HCT116 (cell line): ENCODE measurements at regions of chr7 and their contacts with region 1.

Region 1: GRCh38 chr7:86814661-86815379 is 171.1 kb downstream of the GRM3 start:
- DNase-seq: peak; percentile 28
- ATAC-seq: peak; percentile 74
- H3K4me3 ChIP-seq: no peak overlapping the region
- H3K27ac ChIP-seq: no peak overlapping the region
- H3K4me1 ChIP-seq: no peaks in the 10 kb centered on the region
- H3K27me3 ChIP-seq: 0 out of 2 replicates have a peak, but pooled peaks cover 5% of the 10 kb centered on the region
- CTCF ChIP-seq: peak; percentile 40 to 68 (median 68); a peak in 5 of 6 replicates
- POLR2A ChIP-seq: no peak
- RAD21 ChIP-seq: peak; percentile 64

Region 2: DNA sequence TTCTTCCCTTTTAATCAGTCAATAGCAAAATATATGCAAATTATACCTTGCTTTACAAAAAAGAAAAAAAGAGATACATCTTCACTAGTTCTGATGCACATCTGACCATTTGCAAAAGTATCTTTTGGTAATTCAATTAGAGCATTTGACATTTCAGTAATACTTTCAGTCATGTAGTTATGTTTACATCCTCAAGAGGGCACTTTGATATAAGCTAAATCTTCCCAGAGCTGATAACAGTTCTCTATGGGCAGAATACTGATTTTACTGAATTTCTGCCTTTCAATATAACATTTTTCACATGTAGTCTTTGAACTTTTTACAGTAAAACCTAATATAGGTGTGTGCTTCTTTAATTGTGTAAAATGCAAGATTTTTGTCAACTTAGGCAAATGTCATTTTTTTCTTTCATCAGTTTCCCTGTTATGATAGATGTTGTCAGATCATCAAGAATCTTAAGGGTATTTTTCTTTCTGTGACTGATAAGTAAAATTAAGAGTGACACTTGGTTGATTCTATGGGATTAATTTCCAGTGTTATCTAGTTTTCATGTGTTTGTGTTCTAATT is 924.5 kb before region 1 on chr7:
- CTCF ChIA-PET with region 1: interaction called, 12 read pairs
- POLR2A ChIA-PET with region 1: no interaction called
- RAD21 ChIA-PET with region 1: interaction called in 1 of 2 experiments, 3 read pairs
- intact Hi-C with region 1: loop called (anchors 1 kb)
- DNase-seq: peak; percentile 6
- ATAC-seq: peak; percentile 54; the same call in 1 of the 2 replicates
- H3K4me3 ChIP-seq: no peak overlapping the region
- H3K27ac ChIP-seq: no peak overlapping the region
- H3K4me1 ChIP-seq: no peaks in the 10 kb centered on the region
- H3K27me3 ChIP-seq: no peaks in the 10 kb centered on the region
- CTCF ChIP-seq: peak; percentile 38 to 62 (median 41); a peak in 5 of 6 replicates
- POLR2A ChIP-seq: no peak
- RAD21 ChIP-seq: peak; percentile 75

Region 3: GRCh38 chr7:86667732-86668131 is 147.1 kb before region 1 on chr7:
- CTCF ChIA-PET with region 1: interaction called, 33 read pairs
- POLR2A ChIA-PET with region 1: no interaction called
- RAD21 ChIA-PET with region 1: interaction called in 1 of 2 experiments, 3 read pairs
- intact Hi-C with region 1: loop called (anchors 5 kb)
- DNase-seq: peak; percentile 1
- ATAC-seq: no peak
- H3K4me3 ChIP-seq: no peak overlapping the region
- H3K27ac ChIP-seq: no peak overlapping the region
- H3K4me1 ChIP-seq: no peaks in the 10 kb centered on the region
- H3K27me3 ChIP-seq: no peaks in the 10 kb centered on the region; the same call in 1 of the 2 replicates
- CTCF ChIP-seq: peak in 1 of 3 experiments; percentile 25; a peak in 2 of 6 replicates
- POLR2A ChIP-seq: no peak
- RAD21 ChIP-seq: peak; percentile 41